ENCODE measurements at regions of chr6 and their contacts with region 1.

Region 1: DNA sequence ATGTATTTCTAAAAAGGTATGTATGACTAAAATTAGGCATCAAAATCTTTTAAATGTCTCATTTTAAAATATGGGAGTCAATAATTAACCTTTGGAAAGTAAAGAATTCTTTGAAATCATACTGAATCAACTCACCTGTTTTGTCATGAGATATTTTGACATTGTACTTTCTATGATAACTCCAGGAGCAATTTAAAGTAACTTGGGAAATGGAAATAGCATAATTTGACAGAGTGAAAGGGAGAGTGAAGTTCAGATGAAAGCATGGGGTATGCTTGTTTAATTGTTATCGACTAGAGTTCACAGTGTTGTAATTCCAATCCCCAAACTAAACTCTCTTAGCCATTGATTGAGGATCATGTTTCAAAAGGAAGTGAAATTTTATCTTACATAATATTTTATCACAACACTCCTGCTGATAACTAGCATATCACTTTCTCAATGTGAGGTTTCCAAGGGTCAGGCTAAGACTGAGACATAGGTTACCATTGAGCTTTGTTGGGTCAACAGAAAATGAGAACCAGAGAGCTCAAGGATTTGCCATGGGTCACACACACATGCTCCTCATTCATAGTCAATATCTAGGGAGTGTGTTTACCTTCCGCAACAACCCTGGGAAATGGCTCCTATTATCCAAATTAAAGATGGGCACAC is 2.3 kb downstream of the GSTA1 start:
- DNase-seq: no peak
- H3K4me3 ChIP-seq: no peak overlapping the region
- H3K4me3 Mint-ChIP-seq: no peak overlapping the region
- H3K27ac Mint-ChIP-seq: no peak overlapping the region
- H3K4me1 ChIP-seq: no peaks in the 10 kb centered on the region
- H3K4me1 Mint-ChIP-seq: no peaks in the 10 kb centered on the region
- H3K27me3 ChIP-seq: no peaks in the 10 kb centered on the region
- H3K27me3 Mint-ChIP-seq: no peaks in the 10 kb centered on the region
- CTCF ChIP-seq: no peak

Region 2: GRCh38 chr6:52760105-52760765 is 41.1 kb before region 1 on chr6:
- CTCF ChIA-PET with region 1: interaction called, 8 read pairs
- POLR2A ChIA-PET with region 1: interaction called, 4 read pairs
- intact Hi-C with region 1: loop called (anchors 5 kb)
- DNase-seq: no peak
- H3K4me3 ChIP-seq: no peak overlapping the region
- H3K4me3 Mint-ChIP-seq: no peak overlapping the region
- H3K27ac Mint-ChIP-seq: no peak overlapping the region
- H3K4me1 ChIP-seq: peaks cover 6% of the 10 kb centered on the region
- H3K4me1 Mint-ChIP-seq: peaks cover 10% of the 10 kb centered on the region
- H3K27me3 ChIP-seq: no peaks in the 10 kb centered on the region
- H3K27me3 Mint-ChIP-seq: no peaks in the 10 kb centered on the region
- CTCF ChIP-seq: no peak

Region 3: GRCh38 chr6:52779237-52779636 is 22.1 kb before region 1 on chr6:
- CTCF ChIA-PET with region 1: no interaction called
- POLR2A ChIA-PET with region 1: no interaction called
- intact Hi-C with region 1: no loop called
- DNase-seq: no peak
- H3K4me3 ChIP-seq: no peak overlapping the region
- H3K4me3 Mint-ChIP-seq: no peak overlapping the region
- H3K27ac Mint-ChIP-seq: no peak overlapping the region
- H3K4me1 ChIP-seq: no peaks in the 10 kb centered on the region
- H3K4me1 Mint-ChIP-seq: no peaks in the 10 kb centered on the region
- H3K27me3 ChIP-seq: no peaks in the 10 kb centered on the region
- H3K27me3 Mint-ChIP-seq: no peaks in the 10 kb centered on the region
- CTCF ChIP-seq: no peak

Region 4: GRCh38 chr6:53048431-53049195 is 247.3 kb after region 1 on chr6:
- CTCF ChIA-PET with region 1: no interaction called
- POLR2A ChIA-PET with region 1: interaction called, 16 read pairs
- intact Hi-C with region 1: no loop called
- DNase-seq: no peak
- H3K4me3 ChIP-seq: no peak overlapping the region
- H3K4me3 Mint-ChIP-seq: no peak overlapping the region
- H3K27ac Mint-ChIP-seq: no peak overlapping the region
- H3K4me1 ChIP-seq: no peaks in the 10 kb centered on the region
- H3K4me1 Mint-ChIP-seq: peaks cover 7% of the 10 kb centered on the region
- H3K27me3 ChIP-seq: no peaks in the 10 kb centered on the region
- H3K27me3 Mint-ChIP-seq: no peaks in the 10 kb centered on the region
- CTCF ChIP-seq: no peak